B cell (primary cell): ENCODE measurements at regions of chr7 and their contacts with region 1.

Region 1: DNA sequence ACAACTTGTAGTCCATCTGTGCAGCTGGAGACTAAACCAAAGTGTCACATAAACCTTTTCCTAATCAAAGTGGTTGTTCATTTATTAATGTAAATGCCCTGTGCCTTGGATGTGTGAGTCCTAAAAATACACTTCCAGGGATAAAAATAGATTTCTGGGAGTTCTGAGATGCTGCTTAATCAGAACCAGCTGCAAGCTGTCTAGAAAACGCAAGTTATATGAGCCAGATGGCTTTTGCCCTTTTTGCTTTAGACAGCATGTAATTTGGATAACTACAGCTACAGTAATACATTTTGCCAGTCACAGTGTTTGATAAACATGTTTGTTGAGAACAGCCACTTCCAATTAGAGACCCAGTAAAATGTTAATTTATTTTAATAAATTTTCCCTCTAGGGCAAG is 185.1 kb upstream of the PRPS1L1 start:
- DNase-seq: no peak
- ATAC-seq: no peak
- H3K4me3 ChIP-seq: no peak overlapping the region
- H3K4me3 Mint-ChIP-seq: no peak overlapping the region
- H3K27ac ChIP-seq: no peak overlapping the region
- H3K27ac Mint-ChIP-seq: no peak overlapping the region
- H3K4me1 ChIP-seq: peaks cover 6 to 7% of the 10 kb centered on the region in 2 donors
- H3K4me1 Mint-ChIP-seq: peaks cover 10% of the 10 kb centered on the region
- H3K27me3 ChIP-seq: no peaks in the 10 kb centered on the region
- H3K27me3 Mint-ChIP-seq: peaks cover 3% of the 10 kb centered on the region
- CTCF ChIP-seq: no peak

Region 2: GRCh38 chr7:18064242-18064838 is 148.4 kb before region 1 on chr7:
- CTCF ChIA-PET with region 1: interaction called, 5 read pairs
- POLR2A ChIA-PET with region 1: no interaction called
- intact Hi-C with region 1: loop called (anchors 10 kb)
- DNase-seq: peak; percentile 38
- ATAC-seq: no peak
- H3K4me3 ChIP-seq: no peak overlapping the region
- H3K4me3 Mint-ChIP-seq: no peak overlapping the region
- H3K27ac ChIP-seq: no peak overlapping the region
- H3K27ac Mint-ChIP-seq: no peak overlapping the region
- H3K4me1 ChIP-seq: no peaks in the 10 kb centered on the region
- H3K4me1 Mint-ChIP-seq: no peaks in the 10 kb centered on the region
- H3K27me3 ChIP-seq: no peaks in the 10 kb centered on the region
- H3K27me3 Mint-ChIP-seq: peaks cover 4% of the 10 kb centered on the region
- CTCF ChIP-seq: peak; percentile 58

Region 3: DNA sequence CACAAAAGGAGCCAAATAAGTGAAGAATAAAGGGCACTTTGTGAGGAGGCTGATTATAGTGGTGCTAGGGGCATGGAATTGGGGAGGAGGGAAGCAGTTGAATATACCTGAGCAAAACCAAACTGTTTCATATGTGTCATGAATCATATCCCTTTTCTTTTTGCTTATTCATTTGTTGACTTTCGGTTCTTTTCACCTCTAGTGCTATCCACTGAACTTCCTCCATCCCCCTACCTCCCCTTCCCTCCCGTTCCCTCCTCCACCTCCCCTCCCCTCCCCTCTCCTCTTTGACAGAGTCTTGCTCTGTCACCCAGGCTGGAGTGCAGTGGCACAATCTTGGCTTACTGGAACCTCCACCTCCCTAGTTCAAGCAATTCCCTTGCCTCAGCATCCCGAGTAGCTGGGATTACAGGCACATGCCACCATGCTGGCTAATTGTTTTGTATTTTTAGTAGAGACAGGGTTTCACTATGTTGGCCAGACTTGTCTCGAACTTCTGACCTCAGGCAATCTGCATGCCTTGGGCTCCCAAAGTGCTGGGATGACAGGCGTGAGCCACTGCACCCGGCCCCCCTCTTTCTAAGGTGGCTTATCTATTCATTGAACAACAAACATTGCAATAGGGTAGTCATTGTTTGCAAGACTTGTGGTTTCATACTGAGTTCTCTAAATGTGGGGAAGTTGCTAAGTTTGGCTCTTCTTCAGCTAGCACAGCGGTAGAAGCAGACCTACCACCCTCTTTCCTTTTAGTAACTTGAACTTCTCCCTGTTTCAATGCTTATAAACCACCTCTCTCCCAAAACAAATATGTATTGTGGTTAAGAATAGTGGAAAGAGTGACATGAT is 34.7 kb before region 1 on chr7:
- CTCF ChIA-PET with region 1: no interaction called
- POLR2A ChIA-PET with region 1: no interaction called
- intact Hi-C with region 1: no loop called
- DNase-seq: peak; percentile 46
- ATAC-seq: peak; percentile 84
- H3K4me3 ChIP-seq: peak overlapping the region in 4 of 5 experiments; percentile 4 to 19 (median 9)
- H3K4me3 Mint-ChIP-seq: peak overlapping the region; percentile 44
- H3K27ac ChIP-seq: peak overlapping the region; percentile 33 to 40
- H3K27ac Mint-ChIP-seq: peak overlapping the region; percentile 73
- H3K4me1 ChIP-seq: peaks cover 20 to 26% of the 10 kb centered on the region in 2 donors
- H3K4me1 Mint-ChIP-seq: peaks cover 44% of the 10 kb centered on the region
- H3K27me3 ChIP-seq: no peaks in the 10 kb centered on the region
- H3K27me3 Mint-ChIP-seq: no peaks in the 10 kb centered on the region
- CTCF ChIP-seq: no peak

Region 4: GRCh38 chr7:18320971-18321567 is 108.3 kb after region 1 on chr7:
- CTCF ChIA-PET with region 1: interaction called, 12 read pairs
- POLR2A ChIA-PET with region 1: no interaction called
- intact Hi-C with region 1: loop called (anchors 1 kb)
- DNase-seq: peak; percentile 63
- ATAC-seq: peak; percentile 81
- H3K4me3 ChIP-seq: no peak overlapping the region
- H3K4me3 Mint-ChIP-seq: no peak overlapping the region
- H3K27ac ChIP-seq: no peak overlapping the region
- H3K27ac Mint-ChIP-seq: no peak overlapping the region
- H3K4me1 ChIP-seq: peaks cover 4 to 20% of the 10 kb centered on the region in 2 donors
- H3K4me1 Mint-ChIP-seq: peaks cover 39% of the 10 kb centered on the region
- H3K27me3 ChIP-seq: no peaks in the 10 kb centered on the region
- H3K27me3 Mint-ChIP-seq: no peaks in the 10 kb centered on the region
- CTCF ChIP-seq: peak; percentile 81